ENCODE measurements at regions of chr3 and their contacts with region 1.

Region 1: DNA sequence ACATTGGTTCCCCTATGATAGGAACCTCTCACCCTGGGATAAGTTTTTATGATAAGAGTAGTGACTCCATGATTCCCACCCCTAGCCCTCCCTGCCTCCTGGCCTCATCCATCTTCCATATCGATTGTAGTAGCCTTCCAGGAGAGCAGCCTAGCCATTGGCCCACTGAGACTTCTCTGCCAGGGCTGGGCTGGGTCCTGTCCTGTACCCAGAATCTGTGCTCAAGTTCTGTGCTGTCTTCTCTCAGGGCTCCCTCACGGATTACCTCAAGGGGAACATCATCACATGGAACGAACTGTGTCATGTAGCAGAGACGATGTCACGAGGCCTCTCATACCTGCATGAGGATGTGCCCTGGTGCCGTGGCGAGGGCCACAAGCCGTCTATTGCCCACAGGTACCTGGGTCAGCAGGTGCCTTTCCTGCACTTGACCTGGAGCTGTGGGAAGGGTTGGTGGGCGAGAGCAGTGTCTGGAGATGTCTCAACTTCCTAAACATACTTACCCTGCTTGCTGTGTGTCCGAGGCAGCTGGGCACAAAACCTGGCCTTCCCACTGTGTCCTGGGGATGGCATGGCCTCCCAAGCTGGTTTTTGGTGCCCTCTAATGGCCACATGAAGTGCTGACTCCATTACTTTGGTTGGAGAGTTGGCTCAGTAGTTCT is 16.6 kb upstream of the EXOG start:
- DNase-seq: peak; percentile 64 to 73 (median 70)
- ATAC-seq: peak; percentile 88
- H3K4me3 ChIP-seq: no peak overlapping the region
- H3K27ac ChIP-seq: no peak overlapping the region
- H3K4me1 ChIP-seq: peaks cover 0 to 3% of the 10 kb centered on the region in 2 experiments; a peak in 1 of 5 replicates
- H3K27me3 ChIP-seq: no peaks in the 10 kb centered on the region
- CTCF ChIP-seq: peak; percentile 80 to 91 (median 86)
- EP300 ChIP-seq: no peak
- POLR2A ChIP-seq: no peak
- RAD21 ChIP-seq: peak; percentile 85 to 87

Region 2: DNA sequence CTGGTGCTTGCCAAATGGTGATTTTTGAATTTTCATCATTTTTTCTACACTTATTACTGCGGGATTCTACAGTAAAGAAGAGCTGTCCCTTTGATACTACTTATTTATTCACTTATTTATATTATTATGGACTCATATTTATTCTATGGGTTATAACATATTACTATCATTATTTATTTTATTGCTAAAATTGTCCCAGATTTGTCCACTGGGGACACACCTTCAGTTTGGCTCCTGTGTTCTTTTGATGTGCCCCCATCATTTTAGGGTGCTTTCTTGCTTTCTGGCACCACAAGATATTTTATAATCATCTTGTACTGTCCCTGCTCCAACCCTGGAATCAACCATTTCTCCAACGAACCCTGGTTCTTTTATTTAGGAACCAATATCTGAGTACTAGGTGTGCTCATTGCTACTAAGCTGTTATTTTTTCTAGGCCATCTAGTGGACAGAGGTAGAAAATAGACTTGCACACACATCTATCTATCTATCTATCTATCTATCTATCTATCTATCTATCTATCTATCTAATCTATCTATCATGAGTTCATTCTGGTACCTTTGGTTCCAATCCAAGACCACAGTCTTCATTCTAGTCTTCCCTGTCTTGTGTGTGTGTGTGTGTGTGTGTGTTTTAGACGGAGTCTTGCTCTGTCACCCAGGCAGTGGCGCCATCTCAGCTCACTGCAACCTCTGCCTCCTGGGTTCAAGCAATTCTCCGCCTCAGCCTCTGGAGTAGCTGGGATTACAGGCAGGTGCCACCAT is 181.4 kb before region 1 on chr3:
- CTCF ChIA-PET with region 1: no interaction called
- POLR2A ChIA-PET with region 1: no interaction called
- in situ Hi-C with region 1: no loop called
- intact Hi-C with region 1: loop called (anchors 5 kb)
- DNase-seq: no peak
- ATAC-seq: no peak
- H3K4me3 ChIP-seq: no peak overlapping the region
- H3K27ac ChIP-seq: no peak overlapping the region
- H3K4me1 ChIP-seq: peaks cover 0 to 4% of the 10 kb centered on the region in 2 experiments; a peak in 1 of 5 replicates
- H3K27me3 ChIP-seq: peaks cover 2 to 11% of the 10 kb centered on the region in 2 experiments; a peak in 3 of 5 replicates
- CTCF ChIP-seq: peak in 1 of 3 experiments; percentile 39; a peak in 2 of 6 replicates
- EP300 ChIP-seq: no peak
- POLR2A ChIP-seq: no peak
- RAD21 ChIP-seq: 0 out of 4 replicates have a peak, but pooled peaks of 1 of the 2 experiments have one; percentile 11

Region 3: GRCh38 chr3:38560284-38560683 is 80.7 kb after region 1 on chr3:
- CTCF ChIA-PET with region 1: no interaction called
- POLR2A ChIA-PET with region 1: no interaction called
- in situ Hi-C with region 1: no loop called
- intact Hi-C with region 1: no loop called
- DNase-seq: no peak
- ATAC-seq: peak; percentile 77
- H3K4me3 ChIP-seq: no peak overlapping the region
- H3K27ac ChIP-seq: no peak overlapping the region
- H3K4me1 ChIP-seq: no peaks in the 10 kb centered on the region
- H3K27me3 ChIP-seq: peaks cover 7 to 40% of the 10 kb centered on the region in 2 experiments; a peak in 4 of 5 replicates
- CTCF ChIP-seq: peak in 2 of 3 experiments; percentile 14 to 50; a peak in 3 of 6 replicates
- EP300 ChIP-seq: no peak
- POLR2A ChIP-seq: no peak
- RAD21 ChIP-seq: no peak

Measured in K562 (cell line).